Calu3 (cell line): ENCODE measurements at regions of chr2 and their contacts with region 1.

Region 1: DNA sequence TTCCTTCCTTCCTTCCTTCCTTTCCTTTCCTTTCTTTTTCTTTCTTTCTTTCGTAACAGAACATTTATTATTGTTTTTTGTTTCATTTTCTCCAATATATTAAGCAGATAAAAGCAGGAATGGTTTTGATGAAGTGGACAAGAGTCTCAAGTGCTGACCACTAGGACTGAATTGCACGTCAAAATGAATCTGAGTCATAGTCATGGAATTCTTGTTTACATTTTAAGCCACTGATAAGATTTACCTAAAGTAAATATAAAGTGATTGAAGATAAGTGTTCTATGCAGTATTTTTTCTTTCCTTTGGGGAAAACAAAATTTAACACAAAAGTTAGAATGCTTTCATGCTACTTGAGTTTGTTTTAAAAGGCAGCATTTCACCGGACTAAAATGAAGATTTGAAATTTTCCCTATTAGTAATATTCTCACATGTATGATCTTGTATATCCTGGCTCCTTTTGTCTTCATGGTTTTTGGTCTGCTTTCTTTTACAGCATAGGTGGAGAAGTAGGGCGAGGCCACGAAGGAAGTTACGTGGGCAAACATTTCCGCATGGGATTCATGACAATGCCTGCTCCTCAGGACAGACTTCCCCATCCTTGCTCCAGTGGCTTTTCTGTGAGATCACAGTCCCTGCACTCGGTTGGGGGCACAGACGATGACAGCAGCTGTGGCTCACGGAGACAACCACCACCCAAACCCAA is 113.5 kb downstream of the NYAP2 start:
- DNase-seq: no peak
- H3K4me3 Mint-ChIP-seq: no peak overlapping the region
- H3K27ac Mint-ChIP-seq: peak overlapping the region; percentile 62
- H3K4me1 Mint-ChIP-seq: peaks cover 17% of the 10 kb centered on the region
- H3K27me3 Mint-ChIP-seq: peaks cover 25% of the 10 kb centered on the region
- CTCF ChIP-seq: no peak

Region 2: GRCh38 chr2:225479386-225479785 is 33.6 kb before region 1 on chr2:
- CTCF ChIA-PET with region 1: no interaction called
- intact Hi-C with region 1: loop called (anchors 5 kb)
- DNase-seq: no peak
- H3K4me3 Mint-ChIP-seq: no peak overlapping the region
- H3K27ac Mint-ChIP-seq: no peak overlapping the region
- H3K4me1 Mint-ChIP-seq: peaks cover 44% of the 10 kb centered on the region
- H3K27me3 Mint-ChIP-seq: no peaks in the 10 kb centered on the region
- CTCF ChIP-seq: no peak

Region 3: DNA sequence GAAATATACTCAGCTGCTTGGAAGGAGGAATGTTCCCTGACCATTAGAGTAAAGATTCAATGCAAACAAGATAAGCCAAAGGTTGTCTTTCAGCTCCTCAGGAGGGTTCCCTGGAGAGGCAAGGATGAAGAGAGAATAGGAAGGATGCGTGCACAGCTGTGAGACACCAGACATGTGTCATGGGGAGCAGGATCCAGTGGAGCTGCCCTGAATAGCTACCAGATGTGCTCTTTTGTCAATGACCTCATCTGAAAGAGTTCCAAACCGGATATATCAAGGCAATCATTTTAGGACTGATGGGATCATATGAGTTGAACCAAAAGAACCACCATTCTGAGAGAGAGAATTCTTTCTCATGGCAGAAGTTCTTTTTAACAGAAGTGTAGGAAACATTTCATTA is 796.0 kb after region 1 on chr2:
- CTCF ChIA-PET with region 1: no interaction called
- intact Hi-C with region 1: no loop called
- DNase-seq: no peak
- H3K4me3 Mint-ChIP-seq: no peak overlapping the region
- H3K27ac Mint-ChIP-seq: no peak overlapping the region
- H3K4me1 Mint-ChIP-seq: peaks cover 18% of the 10 kb centered on the region
- H3K27me3 Mint-ChIP-seq: no peaks in the 10 kb centered on the region
- CTCF ChIP-seq: no peak